IMR-90 (cell line): ENCODE measurements at regions of chr9 and their contacts with region 1.

Region 1: DNA sequence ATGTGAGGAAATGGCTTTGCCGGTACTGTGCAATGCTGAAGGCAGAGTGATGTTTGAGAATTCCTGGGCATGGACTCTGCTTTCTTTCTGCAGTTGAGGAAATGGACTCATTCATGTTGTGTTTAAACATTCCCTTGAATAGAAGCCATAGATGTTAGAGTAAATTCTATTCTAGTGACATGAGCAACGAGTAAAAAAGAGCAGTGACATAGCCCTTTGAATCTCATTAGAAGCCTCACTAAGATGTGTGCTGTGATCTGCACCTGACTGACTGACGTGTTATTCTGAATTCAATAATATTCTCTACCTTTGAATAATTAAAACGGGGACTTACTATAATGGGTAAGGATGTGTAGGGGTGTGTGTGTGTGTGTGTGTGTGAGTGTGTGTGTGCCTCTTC is 113.7 kb upstream of the KLF4 start:
- DNase-seq: no peak
- ATAC-seq: no peak
- H3K4me3 ChIP-seq: no peak overlapping the region
- H3K27ac ChIP-seq: no peak overlapping the region
- H3K4me1 ChIP-seq: no peaks in the 10 kb centered on the region
- H3K27me3 ChIP-seq: peaks cover 10% of the 10 kb centered on the region
- CTCF ChIP-seq: no peak
- POLR2A ChIP-seq: no peak
- RAD21 ChIP-seq: no peak

Region 2: DNA sequence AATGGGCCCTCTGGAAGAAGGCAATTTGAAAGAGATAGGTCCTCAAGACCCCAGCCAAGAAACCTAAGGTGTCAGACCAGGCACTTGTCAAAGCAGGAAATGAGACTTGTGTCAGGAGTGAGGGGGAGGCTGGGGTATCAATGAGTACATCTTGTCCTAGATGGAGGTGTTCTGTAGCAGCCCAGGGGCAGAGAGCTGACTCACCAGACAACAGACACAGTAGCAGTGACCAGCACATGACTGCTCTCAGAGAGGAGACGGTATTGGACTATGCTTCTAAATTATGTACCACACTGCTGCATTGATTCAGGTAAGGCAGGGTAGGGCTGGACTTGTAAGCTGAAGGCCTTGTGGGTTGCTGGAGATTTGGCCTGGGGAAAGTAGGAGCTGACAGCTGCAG is 437.5 kb after region 1 on chr9:
- CTCF ChIA-PET with region 1: no interaction called
- POLR2A ChIA-PET with region 1: interaction called, 11 read pairs
- dilution Hi-C with region 1: no loop called
- in situ Hi-C with region 1: no loop called
- intact Hi-C with region 1: no loop called
- DNase-seq: peak; percentile 54
- ATAC-seq: peak; percentile 74
- H3K4me3 ChIP-seq: no peak overlapping the region
- H3K27ac ChIP-seq: no peak overlapping the region
- H3K4me1 ChIP-seq: peaks cover 13% of the 10 kb centered on the region
- H3K27me3 ChIP-seq: no peaks in the 10 kb centered on the region
- CTCF ChIP-seq: no peak
- POLR2A ChIP-seq: no peak
- RAD21 ChIP-seq: no peak